HCT116 (cell line): ENCODE measurements at regions of chr12 and their contacts with region 1.

Region 1: GRCh38 chr12:110280779-110281548 is at the start of gene ATP2A2:
- DNase-seq: peak; percentile 63
- ATAC-seq: peak; percentile 89
- H3K4me3 ChIP-seq: peak within 1 kb of the TSS; percentile 65 to 87
- H3K27ac ChIP-seq: peak within 1 kb of the TSS; percentile 94
- H3K4me1 ChIP-seq: peaks cover 12 to 25% of the 10 kb centered on the region in 2 experiments
- H3K27me3 ChIP-seq: no peaks in the 10 kb centered on the region
- CTCF ChIP-seq: no peak
- POLR2A ChIP-seq: peak; percentile 93
- RAD21 ChIP-seq: no peak
- total RNA-seq, gene ATP2A2: 239 TPM

Region 2: DNA sequence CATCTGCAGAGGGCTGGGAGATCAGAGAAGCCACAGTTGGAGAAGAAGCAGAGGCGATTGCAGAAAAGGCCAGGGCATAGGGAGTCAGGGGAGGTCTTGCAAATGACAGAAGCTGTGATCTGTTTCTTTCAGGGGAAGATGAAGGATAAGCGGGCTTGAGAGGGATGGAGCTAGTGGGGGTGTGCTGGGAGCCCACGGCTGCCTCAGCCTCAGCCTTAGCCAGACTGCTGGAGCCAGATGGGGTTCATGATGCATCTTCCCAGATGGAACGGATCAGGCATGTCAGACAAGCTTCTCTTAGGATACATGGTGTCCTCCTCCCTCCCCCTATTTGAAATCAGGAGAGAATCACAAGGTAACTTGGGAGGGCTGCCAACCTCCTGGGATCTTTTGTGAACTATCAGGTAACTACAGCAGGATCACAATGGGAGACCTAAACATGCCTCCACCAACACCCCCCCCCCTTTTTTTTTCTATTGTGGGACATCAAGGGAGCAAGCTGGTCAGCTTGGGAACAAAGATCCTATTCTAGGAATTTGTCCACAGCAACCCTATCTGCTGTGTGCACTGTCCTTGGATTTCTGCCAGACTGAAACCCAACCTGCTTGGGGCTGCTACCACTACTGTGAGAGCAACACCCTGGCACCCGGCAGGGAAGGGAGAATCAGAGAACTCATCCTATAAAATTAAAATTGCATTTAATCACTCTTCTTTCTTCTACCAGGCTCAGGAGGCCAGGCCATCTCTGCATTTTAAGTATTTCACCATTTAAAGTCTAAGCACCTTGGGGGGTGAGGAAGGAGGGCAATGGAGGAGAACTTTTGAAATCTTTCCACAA is 10.6 kb before region 1 on chr12:
- CTCF ChIA-PET with region 1: interaction called, 3 read pairs
- POLR2A ChIA-PET with region 1: interaction called, 10 read pairs
- RAD21 ChIA-PET with region 1: interaction called in 1 of 2 experiments, 3 read pairs
- intact Hi-C with region 1: no loop called
- DNase-seq: no peak
- ATAC-seq: peak; percentile 46
- H3K4me3 ChIP-seq: peak overlapping the region; percentile 21 to 50
- H3K27ac ChIP-seq: peak overlapping the region; percentile 76
- H3K4me1 ChIP-seq: peaks cover 34 to 46% of the 10 kb centered on the region in 2 experiments
- H3K27me3 ChIP-seq: no peaks in the 10 kb centered on the region
- CTCF ChIP-seq: no peak
- POLR2A ChIP-seq: no peak
- RAD21 ChIP-seq: no peak